ENCODE measurements at regions of chr7 and their contacts with region 1.

Region 1: DNA sequence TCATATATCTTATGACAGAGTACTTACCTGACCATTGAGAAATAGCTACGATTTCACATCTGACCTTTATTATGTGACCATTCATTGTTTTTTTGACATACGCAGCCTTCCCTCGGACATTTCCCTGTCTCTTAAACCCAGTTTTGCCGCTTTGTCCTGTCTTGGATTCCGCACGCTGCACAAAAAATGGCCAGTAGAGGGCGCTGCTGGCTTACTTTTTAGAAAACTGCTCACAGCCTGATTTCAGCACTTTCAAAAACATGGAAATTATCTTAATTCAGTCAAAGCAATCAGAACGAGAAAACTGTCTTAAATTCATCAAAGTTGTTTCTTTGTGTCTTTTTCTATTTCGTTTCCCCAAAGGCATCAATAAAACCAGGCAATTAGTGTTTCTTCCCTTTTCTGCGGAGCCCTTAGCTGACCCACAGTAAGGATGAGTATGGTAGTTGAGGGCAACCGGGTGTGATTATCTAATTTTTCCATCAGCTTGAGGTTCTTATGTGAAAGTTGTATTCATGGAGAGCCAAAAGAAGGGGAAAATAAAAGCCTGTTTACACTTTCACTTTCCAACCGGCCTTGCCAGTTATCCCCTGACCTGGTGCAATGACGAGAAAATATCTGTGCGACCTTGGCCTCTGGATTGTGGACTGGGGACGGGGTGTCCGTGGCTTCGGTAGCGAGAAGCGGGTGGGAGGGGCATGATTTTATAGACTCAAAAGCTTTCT is 144.4 kb downstream of the DYNC1I1 start:
- DNase-seq: peak; percentile 48 to 81 (median 68)
- ATAC-seq: no peak
- H3K4me3 ChIP-seq: no peak overlapping the region
- H3K4me3 Mint-ChIP-seq: no peak overlapping the region
- H3K27ac ChIP-seq: no peak overlapping the region
- H3K27ac Mint-ChIP-seq: no peak overlapping the region
- H3K4me1 ChIP-seq: no peaks in the 10 kb centered on the region
- H3K4me1 Mint-ChIP-seq: peaks cover 3% of the 10 kb centered on the region
- H3K27me3 ChIP-seq: no peaks in the 10 kb centered on the region
- H3K27me3 Mint-ChIP-seq: peaks cover 20% of the 10 kb centered on the region
- CTCF ChIP-seq: peak; percentile 93

Region 2: DNA sequence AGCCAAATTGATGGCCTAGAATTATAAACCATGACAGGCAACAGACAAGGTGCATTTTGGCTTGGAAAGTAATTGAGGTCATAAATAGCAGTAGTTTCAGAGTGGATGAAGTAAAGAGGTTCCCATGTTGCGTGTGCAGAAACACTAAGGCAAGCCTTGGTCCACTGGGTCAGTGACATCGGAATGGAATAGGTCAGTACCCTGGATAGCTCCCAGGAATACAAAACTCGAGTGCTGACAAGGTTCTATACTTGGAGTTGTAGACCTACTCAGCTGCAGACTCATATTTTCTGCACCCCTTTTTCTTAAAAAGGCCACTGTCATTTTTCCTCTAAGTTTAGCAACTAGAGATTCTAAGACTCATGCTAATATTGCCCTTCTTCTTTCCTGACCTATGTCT is 11.6 kb before region 1 on chr7:
- CTCF ChIA-PET with region 1: interaction called, 35 read pairs
- POLR2A ChIA-PET with region 1: no interaction called
- intact Hi-C with region 1: no loop called
- DNase-seq: no peak
- ATAC-seq: no peak
- H3K4me3 ChIP-seq: no peak overlapping the region
- H3K4me3 Mint-ChIP-seq: no peak overlapping the region
- H3K27ac ChIP-seq: no peak overlapping the region
- H3K27ac Mint-ChIP-seq: no peak overlapping the region
- H3K4me1 ChIP-seq: no peaks in the 10 kb centered on the region
- H3K4me1 Mint-ChIP-seq: no peaks in the 10 kb centered on the region
- H3K27me3 ChIP-seq: no peaks in the 10 kb centered on the region
- H3K27me3 Mint-ChIP-seq: peaks cover 8% of the 10 kb centered on the region
- CTCF ChIP-seq: no peak

Region 3: GRCh38 chr7:95927756-95928155 is 11.0 kb after region 1 on chr7:
- CTCF ChIA-PET with region 1: interaction called, 24 read pairs
- POLR2A ChIA-PET with region 1: no interaction called
- intact Hi-C with region 1: no loop called
- DNase-seq: no peak
- ATAC-seq: no peak
- H3K4me3 ChIP-seq: no peak overlapping the region
- H3K4me3 Mint-ChIP-seq: no peak overlapping the region
- H3K27ac ChIP-seq: no peak overlapping the region
- H3K27ac Mint-ChIP-seq: no peak overlapping the region
- H3K4me1 ChIP-seq: no peaks in the 10 kb centered on the region
- H3K4me1 Mint-ChIP-seq: no peaks in the 10 kb centered on the region
- H3K27me3 ChIP-seq: no peaks in the 10 kb centered on the region
- H3K27me3 Mint-ChIP-seq: peaks cover 19% of the 10 kb centered on the region
- CTCF ChIP-seq: no peak

Region 4: DNA sequence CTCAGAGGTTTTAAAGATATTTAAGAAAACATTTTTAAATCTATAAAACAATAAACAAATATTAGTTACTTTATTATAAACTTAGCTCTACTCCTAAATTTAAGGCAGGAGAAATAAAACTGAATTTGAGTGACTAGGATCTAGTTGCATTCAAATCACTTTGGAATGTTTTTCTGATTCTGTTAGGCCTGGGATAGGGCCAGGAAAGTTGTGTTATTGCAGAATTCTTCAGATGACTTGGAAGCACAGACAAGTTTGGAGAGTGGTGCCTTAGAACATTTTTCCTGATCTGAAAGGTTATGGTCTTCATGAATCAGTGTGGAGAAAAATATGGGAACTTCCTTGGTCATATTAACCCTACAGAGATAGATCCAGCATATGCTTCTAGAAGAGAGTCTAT is 420.8 kb after region 1 on chr7:
- CTCF ChIA-PET with region 1: no interaction called
- POLR2A ChIA-PET with region 1: no interaction called
- intact Hi-C with region 1: no loop called
- DNase-seq: no peak
- ATAC-seq: no peak
- H3K4me3 ChIP-seq: no peak overlapping the region
- H3K4me3 Mint-ChIP-seq: no peak overlapping the region
- H3K27ac ChIP-seq: no peak overlapping the region
- H3K27ac Mint-ChIP-seq: no peak overlapping the region
- H3K4me1 ChIP-seq: no peaks in the 10 kb centered on the region
- H3K4me1 Mint-ChIP-seq: no peaks in the 10 kb centered on the region
- H3K27me3 ChIP-seq: peaks cover 0 to 2% of the 10 kb centered on the region in 2 experiments
- H3K27me3 Mint-ChIP-seq: peaks cover 15% of the 10 kb centered on the region
- CTCF ChIP-seq: no peak

Region 5: DNA sequence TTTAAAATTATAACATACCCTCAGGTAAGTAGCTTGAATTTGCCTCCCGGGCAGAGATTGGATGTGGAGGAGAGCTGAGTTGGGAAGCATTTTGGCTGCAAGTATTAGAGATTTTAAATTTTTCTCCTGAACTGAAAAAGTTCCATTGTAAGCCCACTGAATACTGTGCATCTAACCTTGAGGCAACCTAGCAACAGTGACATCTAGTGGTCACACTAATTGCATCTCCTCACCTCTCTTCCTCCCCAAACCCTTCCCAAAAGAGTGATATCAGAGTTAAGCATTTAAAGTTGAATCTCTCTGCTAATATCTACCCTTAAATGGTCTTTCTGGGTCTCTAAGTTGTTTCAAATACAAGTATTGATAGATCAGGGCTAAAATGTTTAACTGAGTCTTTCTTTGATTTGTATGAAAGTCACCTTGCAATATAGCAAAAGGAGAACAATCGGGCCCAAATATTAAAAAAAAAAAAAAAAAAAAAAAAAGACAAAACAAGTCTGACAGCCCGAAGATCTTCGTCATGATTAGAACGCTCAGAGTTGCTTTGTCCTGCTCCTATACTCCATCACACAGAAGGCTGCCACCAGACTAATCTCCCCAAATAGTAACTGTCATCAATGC is 1148.3 kb after region 1 on chr7:
- CTCF ChIA-PET with region 1: interaction called, 33 read pairs
- POLR2A ChIA-PET with region 1: no interaction called
- intact Hi-C with region 1: loop called (anchors 1 kb)
- DNase-seq: peak in 4 of 9 experiments; percentile 12 to 66 (median 38)
- ATAC-seq: no peak
- H3K4me3 ChIP-seq: no peak overlapping the region
- H3K4me3 Mint-ChIP-seq: no peak overlapping the region
- H3K27ac ChIP-seq: no peak overlapping the region
- H3K27ac Mint-ChIP-seq: no peak overlapping the region
- H3K4me1 ChIP-seq: no peaks in the 10 kb centered on the region
- H3K4me1 Mint-ChIP-seq: no peaks in the 10 kb centered on the region
- H3K27me3 ChIP-seq: no peaks in the 10 kb centered on the region
- H3K27me3 Mint-ChIP-seq: peaks cover 8% of the 10 kb centered on the region
- CTCF ChIP-seq: peak; percentile 75

Region 6: DNA sequence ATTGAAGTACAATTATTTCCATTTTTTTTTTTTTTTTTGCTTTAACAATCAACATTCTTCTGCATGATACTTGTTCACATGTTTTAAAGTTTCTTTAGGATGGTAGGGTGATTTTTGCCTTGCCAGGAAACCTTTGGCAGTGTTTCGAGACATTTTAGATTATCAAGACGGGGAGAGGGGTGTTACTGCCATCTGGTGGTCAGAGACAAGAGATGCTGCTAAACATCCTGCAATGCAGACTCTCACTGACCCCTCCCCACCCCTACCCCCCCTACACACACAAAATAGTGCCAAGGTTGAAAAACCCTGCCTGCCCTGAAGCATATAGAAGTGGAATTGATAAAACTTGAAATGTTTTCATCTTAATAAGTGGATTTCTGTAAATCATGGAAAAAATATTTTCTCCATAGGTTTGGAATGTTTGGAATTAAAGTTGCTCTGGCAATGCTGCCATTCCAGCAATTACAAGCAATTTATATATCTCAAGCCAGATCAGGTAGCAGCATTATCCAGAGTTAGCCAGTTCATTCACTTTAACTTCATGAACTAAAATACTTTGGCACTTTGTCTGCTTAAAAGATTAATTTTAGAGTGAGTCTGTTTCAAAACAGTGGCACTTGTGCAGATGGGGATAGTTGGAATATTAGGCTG is 1262.8 kb after region 1 on chr7:
- CTCF ChIA-PET with region 1: interaction called, 5 read pairs
- POLR2A ChIA-PET with region 1: no interaction called
- intact Hi-C with region 1: loop called in 1 of 2 experiments (anchors 2 kb)
- DNase-seq: peak; percentile 6 to 71 (median 41)
- ATAC-seq: peak; percentile 69
- H3K4me3 ChIP-seq: no peak overlapping the region
- H3K4me3 Mint-ChIP-seq: no peak overlapping the region
- H3K27ac ChIP-seq: no peak overlapping the region
- H3K27ac Mint-ChIP-seq: no peak overlapping the region
- H3K4me1 ChIP-seq: no peaks in the 10 kb centered on the region
- H3K4me1 Mint-ChIP-seq: no peaks in the 10 kb centered on the region
- H3K27me3 ChIP-seq: no peaks in the 10 kb centered on the region
- H3K27me3 Mint-ChIP-seq: no peaks in the 10 kb centered on the region
- CTCF ChIP-seq: peak; percentile 80

Region 7: DNA sequence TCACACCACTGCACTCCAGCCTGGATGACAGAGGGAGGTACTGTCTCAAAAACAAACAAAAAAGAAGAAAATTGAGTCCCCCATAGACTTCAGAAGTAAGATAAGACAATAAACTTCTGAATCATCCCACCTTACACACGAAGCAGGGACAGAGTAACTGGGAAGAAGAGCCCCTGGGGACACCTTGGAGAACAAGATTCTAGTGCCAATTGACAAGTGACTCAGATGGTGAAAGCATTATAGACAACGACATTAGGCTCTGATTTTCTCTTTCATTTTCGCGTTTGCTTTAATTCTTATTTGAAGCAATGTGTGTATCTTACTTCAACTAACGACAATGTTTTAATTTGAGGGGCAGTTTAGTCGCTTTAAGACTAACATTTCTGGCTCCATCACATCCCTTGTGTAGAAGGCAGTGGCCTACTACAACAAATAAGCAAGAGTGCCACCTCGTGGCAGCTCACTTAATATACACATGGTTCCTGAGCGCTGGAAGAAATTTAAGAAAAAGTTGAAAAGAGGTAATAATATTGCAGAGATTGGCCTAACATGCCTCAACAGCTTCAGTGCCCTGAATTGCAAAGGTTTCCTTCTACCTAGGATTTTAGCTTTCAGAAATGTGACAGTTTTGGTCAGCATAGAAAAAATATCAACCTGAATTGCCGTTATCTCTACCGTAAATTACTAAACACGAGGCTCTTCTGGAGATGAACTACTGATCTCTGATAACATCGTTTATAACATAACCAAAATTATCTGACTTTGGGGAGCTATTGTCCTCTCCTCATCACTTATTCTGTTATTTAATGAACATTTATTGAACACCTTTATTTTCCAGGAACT is 1918.8 kb after region 1 on chr7:
- CTCF ChIA-PET with region 1: interaction called, 13 read pairs
- POLR2A ChIA-PET with region 1: no interaction called
- intact Hi-C with region 1: loop called (anchors 1 kb)
- DNase-seq: peak; percentile 12 to 67 (median 58)
- ATAC-seq: no peak
- H3K4me3 ChIP-seq: no peak overlapping the region
- H3K4me3 Mint-ChIP-seq: no peak overlapping the region
- H3K27ac ChIP-seq: no peak overlapping the region
- H3K27ac Mint-ChIP-seq: no peak overlapping the region
- H3K4me1 ChIP-seq: no peaks in the 10 kb centered on the region
- H3K4me1 Mint-ChIP-seq: no peaks in the 10 kb centered on the region
- H3K27me3 ChIP-seq: no peaks in the 10 kb centered on the region
- H3K27me3 Mint-ChIP-seq: peaks cover 26% of the 10 kb centered on the region
- CTCF ChIP-seq: peak; percentile 69